AG04449 (cell line): ENCODE measurements at regions of chr13 and their contacts with region 1.

Region 1: GRCh38 chr13:39777527-39778061 is 122.1 kb downstream of the COG6 start:
- DNase-seq: peak; percentile 79
- H3K4me3 ChIP-seq: no peak overlapping the region
- CTCF ChIP-seq: peak; percentile 52

Region 2: GRCh38 chr13:39765801-39766463 is 11.7 kb before region 1 on chr13:
- CTCF ChIA-PET with region 1: interaction called, 11 read pairs
- POLR2A ChIA-PET with region 1: no interaction called
- DNase-seq: no peak
- H3K4me3 ChIP-seq: no peak overlapping the region
- CTCF ChIP-seq: peak; percentile 27